GM10248 (cell line): ENCODE measurements at regions of chr1 and their contacts with region 1.

Region 1: GRCh38 chr1:214022810-214023425 is 35.1 kb downstream of the PROX1 start:
- DNase-seq: no peak
- CTCF ChIP-seq: no peak

Region 2: DNA sequence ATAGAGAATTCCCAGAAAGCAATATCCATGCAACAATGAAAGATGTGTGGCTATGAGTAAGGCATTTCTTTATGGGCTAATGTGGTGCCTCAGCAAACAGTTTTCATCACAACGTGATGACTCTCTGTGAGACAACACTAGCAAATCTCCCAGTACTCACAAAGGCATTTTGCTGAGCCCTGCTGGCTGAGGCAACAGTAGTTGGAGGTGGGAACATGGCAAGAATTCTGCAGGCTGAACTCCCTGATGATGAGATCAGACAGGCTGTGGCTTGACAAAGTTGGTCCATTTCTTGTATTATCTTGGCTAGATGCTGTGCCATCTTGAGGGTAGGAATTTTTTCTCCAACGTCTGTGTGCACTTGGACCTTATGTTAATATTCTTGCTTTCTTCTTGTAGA is 10.5 kb before region 1 on chr1:
- CTCF ChIA-PET with region 1: interaction called, 11 read pairs
- POLR2A ChIA-PET with region 1: no interaction called
- DNase-seq: no peak
- CTCF ChIP-seq: no peak

Region 3: GRCh38 chr1:214050513-214051401 is 27.8 kb after region 1 on chr1:
- CTCF ChIA-PET with region 1: no interaction called
- POLR2A ChIA-PET with region 1: no interaction called
- DNase-seq: no peak
- CTCF ChIP-seq: no peak